Heart left ventricle (tissue), 16 donors: ENCODE measurements at regions of chr15 and their contacts with region 1.

Region 1: DNA sequence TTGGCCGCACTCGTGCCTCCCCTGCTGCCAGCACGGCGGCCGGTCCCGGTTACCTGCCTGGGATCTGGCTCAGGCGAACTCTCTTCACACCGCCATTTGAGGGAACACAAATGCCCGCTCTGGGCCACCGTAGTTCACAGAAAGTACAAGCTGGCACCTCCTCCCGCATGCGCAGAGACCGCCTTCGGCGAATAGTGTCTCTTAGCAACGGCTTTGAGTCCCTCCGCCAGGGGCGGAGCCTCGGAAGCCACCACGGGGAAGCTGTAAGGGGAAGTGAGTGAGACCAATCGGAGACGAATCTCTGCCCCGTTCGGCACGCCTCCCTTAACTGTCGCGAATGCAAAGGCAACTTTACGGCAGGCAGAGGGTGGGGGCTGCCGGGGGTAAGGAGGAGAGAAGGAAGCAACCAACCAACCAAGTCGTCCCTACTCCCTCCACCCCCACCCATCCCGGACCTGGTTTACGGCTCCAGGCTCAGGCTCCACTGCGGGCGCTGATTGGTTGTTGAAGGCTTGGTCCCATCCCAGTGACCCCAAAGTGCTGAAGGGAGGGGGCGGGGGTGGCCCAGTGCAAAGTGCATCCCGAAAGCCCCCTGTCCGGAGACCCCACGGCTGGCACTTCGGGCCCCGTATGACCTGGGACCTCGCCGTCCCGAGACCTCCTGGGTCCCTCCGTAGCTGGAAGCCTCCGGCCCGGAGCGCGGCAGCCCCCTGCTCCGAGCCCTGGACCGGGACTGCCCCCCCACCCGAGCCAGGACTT is at the starts of genes ASB7 and LINS1:
- DNase-seq: peak; percentile 100
- ATAC-seq: peak; percentile 98 to 99 (median 98)
- H3K4me3 ChIP-seq: peak within 1 kb of the TSS; percentile 74 to 97 (median 92)
- H3K27ac ChIP-seq: peak within 1 kb of the TSS in 11 of 12 donors; percentile 85 to 93 (median 86)
- H3K4me1 ChIP-seq: peaks cover 4 to 50% (median 20%) of the 10 kb centered on the region in 12 donors
- H3K27me3 ChIP-seq: no peaks in the 10 kb centered on the region
- CTCF ChIP-seq: no peak
- POLR2A ChIP-seq: peak in 1 of 2 donors; percentile 35
- total RNA-seq, gene ASB7: 4.9 to 6.9 (median 6.6) TPM
- total RNA-seq, gene LINS1: 6.1 to 11.8 (median 9.1) TPM

Region 2: DNA sequence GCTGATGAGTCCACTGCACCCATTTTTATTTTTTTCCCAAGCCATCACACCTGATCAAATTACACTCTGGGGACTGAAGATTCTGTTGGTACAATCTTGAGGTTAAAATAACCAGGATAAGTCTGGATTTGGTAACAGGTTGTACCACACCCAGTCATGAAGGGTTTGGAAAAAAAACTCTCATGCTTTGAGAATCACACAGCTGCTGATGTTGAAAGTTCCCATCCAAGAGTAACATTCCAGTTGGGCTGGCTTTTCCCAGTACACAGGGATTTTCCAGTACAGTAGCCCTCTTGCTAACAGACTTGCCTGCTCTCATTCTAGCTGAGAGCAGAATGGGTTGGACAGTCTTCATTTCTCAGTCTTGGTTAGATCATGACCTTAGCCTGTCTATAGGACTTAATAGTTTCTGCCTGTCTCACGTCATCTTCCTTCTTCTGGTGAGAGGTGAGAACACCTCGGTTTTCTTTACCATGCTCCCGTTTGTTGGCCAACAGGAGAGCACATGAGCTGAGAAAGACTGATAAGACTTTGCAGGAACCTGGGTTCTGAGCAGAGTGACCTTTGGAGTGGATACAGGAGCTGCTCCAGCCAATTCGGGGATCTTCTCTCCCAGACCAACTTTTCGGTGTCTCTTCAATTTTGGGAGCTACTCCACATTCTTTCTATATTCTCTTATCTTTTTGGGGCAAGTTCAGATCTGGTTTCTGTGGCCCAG is 568.9 kb before region 1 on chr15:
- intact Hi-C with region 1: no loop called
- DNase-seq: no peak
- ATAC-seq: peak; percentile 46 to 90 (median 84)
- H3K4me3 ChIP-seq: no peak overlapping the region
- H3K27ac ChIP-seq: peak overlapping the region in 4 of 12 donors; percentile 51 to 73 (median 60)
- H3K4me1 ChIP-seq: peaks cover 0 to 34% (median 2%) of the 10 kb centered on the region in 12 donors
- H3K27me3 ChIP-seq: no peaks in the 10 kb centered on the region
- CTCF ChIP-seq: no peak
- POLR2A ChIP-seq: no peak

Region 3: DNA sequence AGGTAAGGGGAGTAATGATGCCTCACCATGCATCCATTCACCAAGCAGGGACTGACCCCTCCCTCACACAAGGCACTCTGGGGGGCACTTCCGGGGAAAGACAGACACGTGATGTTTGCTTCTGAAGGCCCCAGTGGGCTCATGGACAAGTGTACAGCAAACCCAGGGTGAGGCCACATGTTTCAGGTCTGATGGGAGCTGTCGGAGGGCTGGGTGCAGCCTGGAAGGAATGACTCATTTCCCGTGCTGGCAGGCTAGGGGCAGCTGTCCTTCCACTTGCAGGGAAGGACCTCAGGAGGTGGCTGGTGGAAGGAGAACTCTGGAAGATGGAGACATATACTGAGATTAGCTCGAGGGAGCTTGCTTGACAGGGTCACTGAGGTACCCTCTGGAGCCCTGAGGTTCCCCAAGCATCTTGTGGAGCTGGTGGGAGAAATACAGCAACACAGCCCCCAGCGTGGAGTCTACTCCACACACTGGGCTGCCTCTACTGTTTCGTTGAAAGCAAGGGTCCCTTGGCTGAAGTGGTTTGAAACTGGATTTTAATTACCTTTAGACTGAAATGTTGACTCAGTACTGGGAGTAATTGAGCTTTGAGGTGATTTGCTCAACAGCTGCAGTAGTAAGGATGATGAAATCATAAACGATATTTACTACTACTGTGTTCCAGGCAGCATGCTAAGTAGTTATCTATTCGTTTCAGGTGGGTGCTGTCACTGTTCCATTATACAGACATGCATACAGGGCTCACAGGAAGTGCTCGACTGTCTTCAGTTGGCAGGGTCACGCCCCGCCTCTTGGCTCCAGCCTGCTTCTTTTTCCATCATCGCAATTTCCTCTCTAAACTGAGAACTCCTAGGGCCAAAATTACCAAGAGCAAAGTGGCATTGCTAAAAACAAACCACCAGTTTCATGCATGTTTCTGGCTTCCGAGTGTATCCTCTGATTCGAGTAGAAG is 490.9 kb before region 1 on chr15:
- intact Hi-C with region 1: loop called in 1 of 10 experiments (anchors 5 kb)
- DNase-seq: peak; percentile 73 to 90 (median 78)
- ATAC-seq: peak; percentile 25 to 80 (median 73)
- H3K4me3 ChIP-seq: no peak overlapping the region
- H3K27ac ChIP-seq: peak overlapping the region; percentile 64 to 100 (median 93)
- H3K4me1 ChIP-seq: peaks cover 12 to 68% (median 57%) of the 10 kb centered on the region in 12 donors
- H3K27me3 ChIP-seq: no peaks in the 10 kb centered on the region
- CTCF ChIP-seq: peak in 1 of 12 donors; percentile 11
- POLR2A ChIP-seq: no peak

Region 4: DNA sequence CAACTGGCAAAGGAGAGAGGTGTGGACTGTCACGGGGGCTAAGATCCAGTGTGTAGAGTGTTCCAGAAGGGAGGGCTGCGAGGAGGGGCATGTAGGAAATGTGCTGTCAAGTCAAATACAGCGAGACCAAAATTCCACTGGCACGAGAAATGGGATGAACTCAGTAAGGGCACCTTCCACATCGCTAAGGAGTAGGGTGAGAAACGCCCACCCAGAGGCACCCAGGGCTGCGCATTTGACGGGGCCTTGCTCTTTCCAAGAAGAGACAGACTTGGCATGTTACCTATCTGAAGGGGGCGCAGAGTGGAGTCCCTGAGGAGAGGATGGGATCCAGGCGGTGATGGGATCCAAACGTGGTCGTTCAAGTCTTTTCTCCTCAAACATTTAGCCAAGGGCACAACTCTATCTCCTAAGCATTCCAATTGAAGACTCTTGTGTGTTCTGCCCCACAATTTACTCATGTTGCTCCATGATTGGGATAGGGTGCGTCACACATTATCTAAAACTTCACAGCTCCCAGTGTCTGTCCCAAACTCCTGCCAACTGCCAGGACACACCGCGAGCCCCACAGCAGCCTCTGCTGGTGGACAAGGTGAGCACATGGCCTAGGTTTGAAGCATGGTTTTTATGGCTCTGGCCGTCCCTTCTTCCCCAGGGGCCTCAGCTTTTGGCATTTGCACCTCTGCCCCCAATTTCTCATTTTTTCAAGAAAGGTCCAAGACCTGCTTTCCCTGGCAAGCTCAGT is 667.4 kb after region 1 on chr15:
- intact Hi-C with region 1: loop called in 3 of 10 experiments (anchors 10 kb)
- DNase-seq: peak in 3 of 5 donors; percentile 32 to 71 (median 62)
- ATAC-seq: peak; percentile 48 to 75 (median 62)
- H3K4me3 ChIP-seq: no peak overlapping the region
- H3K27ac ChIP-seq: peak overlapping the region in 2 of 12 donors; percentile 37 to 44
- H3K4me1 ChIP-seq: peaks cover 0 to 45% (median 12%) of the 10 kb centered on the region in 12 donors
- H3K27me3 ChIP-seq: no peaks in the 10 kb centered on the region
- CTCF ChIP-seq: peak; percentile 17 to 55 (median 36)
- POLR2A ChIP-seq: no peak

Region 5: DNA sequence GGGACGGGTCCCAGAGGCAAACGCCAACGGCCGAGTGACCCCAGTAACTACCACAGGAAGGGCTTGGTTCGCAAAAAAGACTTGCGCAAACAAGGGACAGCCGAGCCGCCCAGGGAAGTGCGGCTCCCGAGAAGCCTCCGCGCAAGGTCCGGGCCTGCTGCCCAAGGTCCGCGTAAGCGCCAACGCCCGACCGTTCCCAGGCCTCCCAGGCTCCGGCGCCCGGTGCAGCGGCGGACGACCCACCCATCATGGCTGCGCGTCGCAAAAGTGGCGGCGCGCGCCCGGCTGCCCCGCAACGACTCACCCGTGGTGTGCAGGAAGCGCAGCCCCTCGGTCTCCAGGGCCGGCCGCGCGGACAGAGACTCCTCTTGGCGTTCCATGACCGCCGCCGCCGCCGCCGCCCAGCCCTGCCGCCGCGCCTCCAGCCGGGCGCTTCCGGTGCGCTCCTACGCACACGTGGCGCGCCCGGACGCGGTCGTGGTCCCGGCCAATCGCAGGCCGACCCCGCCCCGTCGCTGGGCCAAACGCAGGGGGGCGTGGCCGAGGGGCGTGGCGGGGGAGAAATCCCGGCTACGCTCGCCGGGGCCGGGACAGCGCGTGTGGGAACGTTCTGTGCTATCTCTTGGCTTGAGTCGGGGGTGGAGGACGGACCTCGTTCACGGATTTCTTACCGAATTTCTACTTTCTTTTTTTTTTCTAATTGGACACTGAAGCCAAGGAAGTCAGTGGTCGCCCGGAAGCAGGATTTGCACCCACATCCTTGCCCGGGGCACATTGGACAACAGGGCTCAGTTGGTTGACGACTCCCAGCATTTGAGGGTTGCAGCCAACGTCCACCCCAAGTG is 675.0 kb after region 1 on chr15 and contains the start of gene SELENOS:
- intact Hi-C with region 1: loop called in 1 of 10 experiments (anchors 10 kb)
- DNase-seq: peak; percentile 93 to 95 (median 94)
- ATAC-seq: peak; percentile 86 to 97 (median 95)
- H3K4me3 ChIP-seq: peak within 1 kb of the TSS; percentile 62 to 98 (median 90)
- H3K27ac ChIP-seq: peak within 1 kb of the TSS; percentile 82 to 97 (median 94)
- H3K4me1 ChIP-seq: peaks cover 6 to 36% (median 18%) of the 10 kb centered on the region in 12 donors
- H3K27me3 ChIP-seq: no peaks in the 10 kb centered on the region
- CTCF ChIP-seq: peak in 1 of 12 donors; percentile 8
- POLR2A ChIP-seq: peak; percentile 96 to 98
- total RNA-seq, gene SELENOS: 38.7 to 72.4 (median 47.5) TPM